ENCODE measurements at regions of chr17 and their contacts with region 1.

Region 1: DNA sequence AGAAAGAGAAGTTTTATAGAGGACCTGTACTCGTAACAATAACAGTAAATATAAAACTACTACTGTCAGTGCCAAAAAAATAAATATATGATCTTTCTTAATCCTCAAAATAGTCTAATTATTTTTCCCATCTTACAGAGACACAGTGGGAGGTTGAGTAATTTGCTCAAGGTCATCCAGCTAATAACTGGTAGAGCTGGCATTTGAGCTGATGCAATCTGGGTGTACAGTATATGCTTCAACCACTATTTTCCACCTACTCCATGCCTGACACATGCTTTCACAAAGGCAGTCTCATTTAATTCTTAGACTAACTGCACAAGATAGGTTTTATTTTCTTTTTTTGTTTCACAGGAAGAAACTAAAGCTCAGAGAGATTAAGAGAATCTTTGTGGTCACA is 33.6 kb downstream of the PIGL start:
- DNase-seq: no peak
- ATAC-seq: no peak
- H3K4me3 Mint-ChIP-seq: no peak overlapping the region
- H3K27ac Mint-ChIP-seq: peak overlapping the region in 2 of 10 donors; percentile 4 to 22
- H3K4me1 Mint-ChIP-seq: peaks cover 7 to 12% (median 9%) of the 10 kb centered on the region in 4 donors
- H3K27me3 Mint-ChIP-seq: no peaks in the 10 kb centered on the region

Region 2: DNA sequence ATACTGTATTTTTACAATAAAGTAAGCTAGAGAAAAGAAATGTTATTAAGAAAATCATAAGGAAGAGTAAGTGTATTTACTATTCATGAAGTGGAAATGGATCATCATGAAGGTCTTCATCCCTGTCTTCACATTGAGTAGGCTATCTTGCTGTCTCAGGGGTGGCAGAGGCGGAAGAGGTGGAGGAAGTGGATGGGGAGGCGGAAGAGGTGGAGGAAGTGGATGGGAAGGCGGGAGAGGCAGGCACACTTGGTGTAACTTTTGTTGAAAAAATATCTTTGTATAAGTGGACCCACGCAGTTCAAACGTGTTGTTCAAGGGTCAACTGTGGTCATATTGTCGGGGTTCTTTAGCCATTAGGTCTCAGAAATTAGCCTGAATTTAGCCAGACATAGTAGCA is 16.5 kb after region 1 on chr17:
- POLR2A ChIA-PET with region 1: interaction called, 11 read pairs
- DNase-seq: no peak
- ATAC-seq: no peak
- H3K4me3 Mint-ChIP-seq: peak overlapping the region in 8 of 10 donors; percentile 37 to 82 (median 64)
- H3K27ac Mint-ChIP-seq: peak overlapping the region; percentile 48 to 95 (median 87)
- H3K4me1 Mint-ChIP-seq: peaks cover 20 to 36% (median 30%) of the 10 kb centered on the region in 4 donors
- H3K27me3 Mint-ChIP-seq: no peaks in the 10 kb centered on the region

Region 3: DNA sequence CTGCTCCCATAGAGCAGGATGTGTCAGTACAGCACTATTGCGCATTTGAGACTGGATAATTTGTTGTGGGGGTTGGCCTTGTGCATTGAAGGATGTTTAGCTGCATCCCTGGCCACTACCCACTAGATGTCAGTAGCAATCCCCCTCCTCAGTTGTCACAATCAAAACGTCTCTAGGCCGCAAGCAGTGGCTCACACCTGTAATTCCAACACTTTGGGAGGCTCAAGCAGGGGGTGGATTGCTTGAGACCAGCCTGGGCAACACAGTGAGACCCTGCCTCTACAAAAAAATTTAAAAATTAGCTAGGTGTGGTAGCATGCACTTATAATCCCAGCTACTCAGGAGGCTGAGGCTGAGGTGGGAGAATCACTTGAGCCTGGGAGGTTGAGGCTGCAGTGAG is 54.2 kb after region 1 on chr17:
- POLR2A ChIA-PET with region 1: no interaction called
- DNase-seq: peak in 3 of 10 donors; percentile 12 to 43 (median 34)
- ATAC-seq: peak; percentile 58 to 65
- H3K4me3 Mint-ChIP-seq: no peak overlapping the region
- H3K27ac Mint-ChIP-seq: peak overlapping the region in 3 of 10 donors; percentile 7 to 25 (median 17)
- H3K4me1 Mint-ChIP-seq: peaks cover 0 to 11% (median 3%) of the 10 kb centered on the region in 4 donors
- H3K27me3 Mint-ChIP-seq: no peaks in the 10 kb centered on the region

Measured in naive thymus-derived CD8-positive, alpha-beta T cell (primary cell).